Caco-2 (cell line): ENCODE measurements at regions of chr7 and their contacts with region 1.

Region 1: GRCh38 chr7:100200693-100201092 is 19.1 kb upstream of the PVRIG start:
- DNase-seq: peak; percentile 59 to 61
- H3K4me3 ChIP-seq: no peak overlapping the region
- H3K4me3 Mint-ChIP-seq: peak overlapping the region; percentile 18
- H3K27ac Mint-ChIP-seq: peak overlapping the region; percentile 1
- H3K4me1 ChIP-seq: peaks cover 15% of the 10 kb centered on the region
- H3K4me1 Mint-ChIP-seq: peaks cover 18% of the 10 kb centered on the region
- H3K27me3 ChIP-seq: no peaks in the 10 kb centered on the region
- H3K27me3 Mint-ChIP-seq: no peaks in the 10 kb centered on the region
- CTCF ChIP-seq: peak in 1 of 2 experiments; percentile 4

Region 2: GRCh38 chr7:100081535-100082102 is 119.1 kb before region 1 on chr7 and contains the start of gene ZNF3:
- CTCF ChIA-PET with region 1: no interaction called
- POLR2A ChIA-PET with region 1: no interaction called
- intact Hi-C with region 1: no loop called
- DNase-seq: peak; percentile 99
- H3K4me3 ChIP-seq: peak within 1 kb of the TSS; percentile 74
- H3K4me3 Mint-ChIP-seq: peak within 1 kb of the TSS; percentile 83
- H3K27ac Mint-ChIP-seq: peak within 1 kb of the TSS; percentile 46
- H3K4me1 ChIP-seq: peaks cover 24% of the 10 kb centered on the region
- H3K4me1 Mint-ChIP-seq: peaks cover 14% of the 10 kb centered on the region
- H3K27me3 ChIP-seq: no peaks in the 10 kb centered on the region
- H3K27me3 Mint-ChIP-seq: no peaks in the 10 kb centered on the region
- CTCF ChIP-seq: peak; percentile 89 to 91
- total RNA-seq, gene ZNF3: 37.8 and 41.1 TPM in 2 replicates

Region 3: GRCh38 chr7:100158229-100159098 is 42.2 kb before region 1 on chr7 and contains the start of gene TRAPPC14:
- CTCF ChIA-PET with region 1: no interaction called
- POLR2A ChIA-PET with region 1: no interaction called
- intact Hi-C with region 1: no loop called
- DNase-seq: peak; percentile 94 to 97
- H3K4me3 ChIP-seq: peak within 1 kb of the TSS; percentile 87
- H3K4me3 Mint-ChIP-seq: peak within 1 kb of the TSS; percentile 79
- H3K27ac Mint-ChIP-seq: peak within 1 kb of the TSS; percentile 90
- H3K4me1 ChIP-seq: peaks cover 27% of the 10 kb centered on the region
- H3K4me1 Mint-ChIP-seq: peaks cover 26% of the 10 kb centered on the region
- H3K27me3 ChIP-seq: no peaks in the 10 kb centered on the region
- H3K27me3 Mint-ChIP-seq: no peaks in the 10 kb centered on the region
- CTCF ChIP-seq: no peak
- total RNA-seq, gene TRAPPC14: 23.2 and 23.5 TPM in 2 replicates

Region 4: GRCh38 chr7:100190048-100190711 is 10.5 kb before region 1 on chr7:
- CTCF ChIA-PET with region 1: interaction called, 8 read pairs
- POLR2A ChIA-PET with region 1: no interaction called
- intact Hi-C with region 1: loop called (anchors 1 kb)
- DNase-seq: peak in 1 of 2 experiments; percentile 49
- H3K4me3 ChIP-seq: no peak overlapping the region
- H3K4me3 Mint-ChIP-seq: no peak overlapping the region
- H3K27ac Mint-ChIP-seq: peak overlapping the region; percentile 3
- H3K4me1 ChIP-seq: no peaks in the 10 kb centered on the region
- H3K4me1 Mint-ChIP-seq: peaks cover 21% of the 10 kb centered on the region
- H3K27me3 ChIP-seq: no peaks in the 10 kb centered on the region
- H3K27me3 Mint-ChIP-seq: no peaks in the 10 kb centered on the region
- CTCF ChIP-seq: peak; percentile 31 to 52

Region 5: GRCh38 chr7:100271716-100272537 is 71.2 kb after region 1 on chr7:
- CTCF ChIA-PET with region 1: no interaction called
- POLR2A ChIA-PET with region 1: no interaction called
- intact Hi-C with region 1: no loop called
- DNase-seq: peak; percentile 98
- H3K4me3 ChIP-seq: peak overlapping the region; percentile 62
- H3K4me3 Mint-ChIP-seq: peak overlapping the region; percentile 69
- H3K27ac Mint-ChIP-seq: no peak overlapping the region
- H3K4me1 ChIP-seq: peaks cover 20% of the 10 kb centered on the region
- H3K4me1 Mint-ChIP-seq: peaks cover 10% of the 10 kb centered on the region
- H3K27me3 ChIP-seq: no peaks in the 10 kb centered on the region
- H3K27me3 Mint-ChIP-seq: no peaks in the 10 kb centered on the region
- CTCF ChIP-seq: peak in 1 of 2 experiments; percentile 60

Region 6: GRCh38 chr7:100369105-100369504 is 168.4 kb after region 1 on chr7:
- CTCF ChIA-PET with region 1: no interaction called
- POLR2A ChIA-PET with region 1: no interaction called
- intact Hi-C with region 1: no loop called
- DNase-seq: peak in 1 of 2 experiments; percentile 35
- H3K4me3 ChIP-seq: no peak overlapping the region
- H3K4me3 Mint-ChIP-seq: peak overlapping the region; percentile 22
- H3K27ac Mint-ChIP-seq: no peak overlapping the region
- H3K4me1 ChIP-seq: no peaks in the 10 kb centered on the region
- H3K4me1 Mint-ChIP-seq: no peaks in the 10 kb centered on the region
- H3K27me3 ChIP-seq: no peaks in the 10 kb centered on the region
- H3K27me3 Mint-ChIP-seq: no peaks in the 10 kb centered on the region
- CTCF ChIP-seq: no peak